HAP-1 (cell line): ENCODE measurements at regions of chr1 and their contacts with region 1.

Region 1: GRCh38 chr1:184386312-184387068 is at the start of gene C1orf21:
- DNase-seq: peak; percentile 88 to 94
- H3K4me3 ChIP-seq: peak within 1 kb of the TSS; percentile 73
- H3K4me1 ChIP-seq: peaks cover 10% of the 10 kb centered on the region
- H3K27me3 ChIP-seq: no peaks in the 10 kb centered on the region

Region 2: GRCh38 chr1:183812686-183813569 is 573.6 kb before region 1 on chr1:
- in situ Hi-C with region 1: no loop called
- DNase-seq: no peak
- H3K4me3 ChIP-seq: no peak overlapping the region
- H3K4me1 ChIP-seq: peaks cover 2% of the 10 kb centered on the region; the same call in 1 of the 2 replicates
- H3K27me3 ChIP-seq: no peaks in the 10 kb centered on the region

Region 3: GRCh38 chr1:184260382-184260781 is 126.1 kb before region 1 on chr1:
- in situ Hi-C with region 1: no loop called
- DNase-seq: no peak
- H3K4me3 ChIP-seq: no peak overlapping the region
- H3K4me1 ChIP-seq: no peaks in the 10 kb centered on the region
- H3K27me3 ChIP-seq: no peaks in the 10 kb centered on the region

Region 4: DNA sequence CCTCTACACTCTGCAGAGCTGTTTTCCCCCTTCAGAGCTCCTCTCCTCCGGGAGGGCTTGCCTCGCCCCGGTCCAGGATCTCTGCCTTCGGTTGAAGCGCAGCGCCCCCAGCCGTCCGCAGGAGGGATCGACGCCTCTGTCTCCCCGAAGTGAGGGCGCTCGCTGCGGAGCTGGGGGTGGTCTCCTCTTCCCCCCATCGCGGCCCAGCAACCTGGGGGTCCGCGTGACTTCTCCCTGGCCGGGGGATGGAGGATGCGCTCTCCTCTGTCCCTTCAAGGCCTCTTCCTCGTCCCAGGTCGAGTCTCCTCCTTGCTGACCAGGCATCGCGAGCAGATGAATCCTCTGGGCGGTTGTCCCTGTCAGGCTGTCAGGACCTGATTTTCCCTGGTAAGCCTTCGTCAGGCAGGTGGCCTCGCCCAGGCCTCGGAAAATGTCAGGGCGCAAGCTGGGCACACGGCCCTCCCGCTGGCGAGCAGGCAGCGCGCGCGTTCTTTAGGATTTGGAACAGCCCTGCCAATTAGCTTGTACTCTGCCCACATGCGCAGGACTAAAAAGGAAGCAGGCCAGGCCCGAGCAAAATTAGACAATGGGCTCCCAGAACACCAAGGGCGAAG is 277.7 kb after region 1 on chr1:
- in situ Hi-C with region 1: loop called (anchors 10 kb)
- DNase-seq: peak; percentile 52 to 88
- H3K4me3 ChIP-seq: no peak overlapping the region
- H3K4me1 ChIP-seq: peaks cover 16% of the 10 kb centered on the region
- H3K27me3 ChIP-seq: no peaks in the 10 kb centered on the region

Region 5: GRCh38 chr1:184684285-184685074 is 298.0 kb after region 1 on chr1:
- in situ Hi-C with region 1: no loop called
- DNase-seq: peak in 1 of 2 experiments; percentile 14
- H3K4me3 ChIP-seq: no peak overlapping the region
- H3K4me1 ChIP-seq: peaks cover 15% of the 10 kb centered on the region
- H3K27me3 ChIP-seq: no peaks in the 10 kb centered on the region